Posterior cingulate gyrus (tissue), 11 donors: ENCODE measurements at regions of chr1 and their contacts with region 1.

Region 1: GRCh38 chr1:182962554-182963115 is 9.7 kb upstream of the SHCBP1L start:
- DNase-seq: peak in 8 of 10 donors; percentile 19 to 95 (median 58)

Region 2: DNA sequence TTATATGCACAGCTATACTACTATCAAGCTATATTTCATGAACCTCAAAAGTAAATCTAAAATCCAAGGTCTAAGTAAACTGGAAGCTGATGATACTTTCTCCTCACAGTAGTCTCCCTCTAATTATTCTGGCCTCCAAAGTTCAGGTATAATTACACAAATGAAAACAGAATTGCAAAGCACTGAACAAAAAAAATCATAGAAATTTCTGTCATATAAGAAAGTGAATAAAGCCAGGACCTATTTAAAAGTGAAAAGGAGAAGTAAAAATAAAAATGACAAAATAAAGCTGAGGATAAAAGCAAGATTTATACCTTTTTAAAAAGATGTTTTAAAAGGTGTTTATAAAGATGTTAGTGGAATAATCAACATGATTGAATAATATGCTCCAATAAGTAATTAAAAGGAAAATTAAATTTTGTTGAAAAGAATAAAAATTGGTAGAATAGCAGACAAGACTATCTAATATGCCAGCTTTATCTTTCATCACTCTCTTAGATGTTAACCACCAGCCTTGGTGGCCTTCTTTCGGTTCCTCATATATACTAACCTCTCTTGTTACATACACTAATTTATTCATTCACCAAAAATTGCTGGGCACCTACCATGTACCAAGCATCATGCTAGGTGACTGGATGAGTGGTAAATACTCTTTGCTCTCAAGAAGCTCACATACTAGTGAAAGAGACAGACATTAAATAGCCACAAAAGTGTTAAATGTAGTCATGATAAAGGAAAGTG is 34.8 kb before region 1 on chr1:
- intact Hi-C with region 1: no loop called
- DNase-seq: no peak

Region 3: GRCh38 chr1:183234660-183235476 is 272.2 kb after region 1 on chr1:
- intact Hi-C with region 1: loop called (anchors 5 kb)
- DNase-seq: peak in 7 of 10 donors; percentile 18 to 88 (median 58)